Activated naive CD4-positive, alpha-beta T cell treated with anti-CD3 and anti-CD28 coated beads for 36 hours (primary cell): ENCODE measurements at regions of chr2 and their contacts with region 1.

Region 1: GRCh38 chr2:170928824-170929685 is at the start of gene GORASP2:
- DNase-seq: peak; percentile 99
- H3K4me3 Mint-ChIP-seq: peak within 1 kb of the TSS; percentile 98
- H3K27ac Mint-ChIP-seq: peak within 1 kb of the TSS; percentile 96
- H3K4me1 Mint-ChIP-seq: peaks cover 39% of the 10 kb centered on the region
- H3K27me3 Mint-ChIP-seq: no peaks in the 10 kb centered on the region
- total RNA-seq, gene GORASP2: 57.1 to 60.2 TPM

Region 2: DNA sequence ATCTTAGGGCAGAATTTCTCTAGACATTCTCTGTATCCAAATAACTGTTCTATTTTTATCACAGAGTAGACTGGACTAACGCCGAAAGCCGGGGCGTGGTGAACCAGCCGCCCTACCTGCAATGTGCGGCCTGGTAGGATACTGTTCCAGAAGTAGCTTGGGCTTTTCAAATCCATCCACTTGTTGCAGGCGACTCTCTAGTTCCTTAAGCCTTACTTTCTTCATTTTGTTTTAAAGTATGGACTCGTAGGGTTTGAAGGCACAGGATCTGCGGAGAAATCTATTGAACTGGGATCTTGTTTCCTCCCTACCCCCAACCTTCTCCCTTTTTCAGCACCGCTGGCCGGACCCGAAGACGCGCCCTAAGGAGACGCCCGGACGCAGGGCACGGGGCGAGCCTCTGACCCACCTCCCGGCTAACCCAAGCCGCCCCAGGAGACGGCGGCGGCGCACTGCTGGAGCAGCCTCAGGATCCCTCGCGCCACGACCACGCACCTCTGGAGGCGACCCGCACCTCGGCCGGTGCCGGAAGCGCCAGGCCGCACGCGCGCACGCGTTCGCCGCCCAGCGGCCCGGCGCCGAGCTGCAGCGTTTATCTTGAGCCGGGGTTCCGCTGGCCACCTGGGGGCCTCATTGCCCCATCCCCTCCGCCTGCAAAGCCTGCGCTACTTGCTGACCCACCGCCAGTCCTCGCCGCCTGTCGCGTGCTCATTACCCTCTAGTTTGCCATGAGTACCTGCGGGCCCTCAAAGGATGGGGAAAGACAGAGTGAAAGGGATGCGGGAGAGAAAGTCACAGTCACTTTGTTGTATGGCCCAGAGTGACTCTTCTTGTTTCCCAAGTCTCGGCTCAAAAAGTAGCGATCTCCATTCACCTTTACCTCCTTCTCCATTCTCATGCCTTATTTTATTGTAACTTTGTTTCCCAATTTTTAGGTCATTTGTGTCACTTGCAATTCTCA is 1104.4 kb before region 1 on chr2 and contains the start of gene METTL5:
- CTCF ChIA-PET with region 1: no interaction called
- intact Hi-C with region 1: loop called (anchors 10 kb)
- DNase-seq: peak; percentile 83
- H3K4me3 Mint-ChIP-seq: peak within 1 kb of the TSS; percentile 84
- H3K27ac Mint-ChIP-seq: peak within 1 kb of the TSS; percentile 71
- H3K4me1 Mint-ChIP-seq: peaks cover 56% of the 10 kb centered on the region
- H3K27me3 Mint-ChIP-seq: no peaks in the 10 kb centered on the region
- total RNA-seq, gene METTL5: 111 to 116 TPM

Region 3: DNA sequence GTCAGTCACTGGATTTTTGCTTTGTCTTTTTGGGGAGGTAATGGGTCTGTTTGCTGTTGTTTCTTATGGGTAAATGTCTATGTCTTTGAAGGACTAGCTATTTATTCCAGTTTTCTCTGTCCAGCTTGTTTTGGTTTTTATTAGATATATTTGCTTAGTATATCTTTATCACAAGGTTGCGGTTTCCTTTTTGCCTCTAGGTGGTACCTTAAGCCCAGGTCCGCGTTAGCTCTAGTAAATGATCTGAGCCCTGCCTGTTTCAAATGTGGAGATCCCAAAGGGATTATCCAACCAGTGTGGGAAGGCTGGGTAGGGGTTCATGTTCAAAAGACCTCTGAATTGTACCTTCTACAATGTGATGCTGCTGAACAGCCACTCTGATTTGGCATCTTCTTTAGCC is 636.6 kb before region 1 on chr2:
- CTCF ChIA-PET with region 1: no interaction called
- intact Hi-C with region 1: no loop called
- DNase-seq: no peak
- H3K4me3 Mint-ChIP-seq: no peak overlapping the region
- H3K27ac Mint-ChIP-seq: no peak overlapping the region
- H3K4me1 Mint-ChIP-seq: no peaks in the 10 kb centered on the region
- H3K27me3 Mint-ChIP-seq: peaks cover 28% of the 10 kb centered on the region

Region 4: GRCh38 chr2:170940066-170940465 is 11.0 kb after region 1 on chr2:
- CTCF ChIA-PET with region 1: interaction called, 9 read pairs
- intact Hi-C with region 1: loop called (anchors 1 kb)
- DNase-seq: no peak
- H3K4me3 Mint-ChIP-seq: no peak overlapping the region
- H3K27ac Mint-ChIP-seq: no peak overlapping the region
- H3K4me1 Mint-ChIP-seq: peaks cover 72% of the 10 kb centered on the region
- H3K27me3 Mint-ChIP-seq: no peaks in the 10 kb centered on the region

Region 5: DNA sequence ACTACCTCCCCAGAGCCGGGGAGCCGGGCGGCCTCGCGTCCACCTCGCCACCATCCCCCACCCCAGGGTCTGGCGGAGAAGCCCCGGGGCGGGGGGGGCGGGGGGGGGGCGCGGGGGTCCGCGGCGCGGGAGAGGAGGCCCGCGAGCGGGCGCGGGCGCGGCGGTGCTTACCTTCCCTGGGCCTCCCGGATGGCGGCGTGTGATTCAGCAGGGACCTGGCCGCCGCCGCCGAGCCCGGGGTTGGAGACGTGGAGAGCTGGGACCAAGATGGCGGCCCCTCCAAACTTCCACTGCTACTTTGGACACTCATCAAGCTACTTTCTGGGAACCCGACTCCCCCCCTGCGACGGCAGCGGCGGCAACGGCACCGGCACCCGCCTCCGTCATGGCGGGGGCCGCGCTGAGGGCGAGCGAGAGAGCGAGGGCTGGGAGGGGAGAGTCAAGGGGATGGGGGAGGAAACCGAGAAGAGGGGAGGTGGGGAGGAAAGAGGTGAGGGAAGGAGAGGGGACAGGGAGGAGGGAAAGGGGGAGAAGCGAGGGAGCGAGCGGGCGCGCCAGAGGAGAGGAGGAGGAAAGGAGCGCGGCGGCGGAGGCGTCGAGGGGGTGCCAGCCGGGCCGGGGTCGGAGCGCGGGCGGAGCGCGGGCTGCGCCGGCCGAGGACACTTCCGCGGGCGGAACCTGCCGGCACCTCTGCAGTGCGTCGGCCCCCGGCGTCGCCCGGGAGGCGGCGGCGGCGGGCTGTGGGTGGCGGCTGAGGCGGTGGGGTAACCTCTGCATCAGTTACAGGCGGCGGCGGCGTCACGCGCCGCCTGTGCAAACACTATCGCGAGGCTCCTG is 231.3 kb after region 1 on chr2 and contains the start of gene TLK1:
- CTCF ChIA-PET with region 1: interaction called, 6 read pairs
- intact Hi-C with region 1: loop called (anchors 1 kb)
- DNase-seq: peak; percentile 75
- H3K4me3 Mint-ChIP-seq: peak within 1 kb of the TSS; percentile 90
- H3K27ac Mint-ChIP-seq: peak within 1 kb of the TSS; percentile 93
- H3K4me1 Mint-ChIP-seq: peaks cover 57% of the 10 kb centered on the region
- H3K27me3 Mint-ChIP-seq: no peaks in the 10 kb centered on the region
- total RNA-seq, gene TLK1: 54.5 to 55.9 TPM

Region 6: GRCh38 chr2:171416009-171416926 is 487.2 kb after region 1 on chr2:
- CTCF ChIA-PET with region 1: interaction called, 4 read pairs
- intact Hi-C with region 1: loop called (anchors 1 kb)
- DNase-seq: peak; percentile 96
- H3K4me3 Mint-ChIP-seq: peak overlapping the region; percentile 32
- H3K27ac Mint-ChIP-seq: peak overlapping the region; percentile 92
- H3K4me1 Mint-ChIP-seq: peaks cover 38% of the 10 kb centered on the region
- H3K27me3 Mint-ChIP-seq: no peaks in the 10 kb centered on the region

Region 7: DNA sequence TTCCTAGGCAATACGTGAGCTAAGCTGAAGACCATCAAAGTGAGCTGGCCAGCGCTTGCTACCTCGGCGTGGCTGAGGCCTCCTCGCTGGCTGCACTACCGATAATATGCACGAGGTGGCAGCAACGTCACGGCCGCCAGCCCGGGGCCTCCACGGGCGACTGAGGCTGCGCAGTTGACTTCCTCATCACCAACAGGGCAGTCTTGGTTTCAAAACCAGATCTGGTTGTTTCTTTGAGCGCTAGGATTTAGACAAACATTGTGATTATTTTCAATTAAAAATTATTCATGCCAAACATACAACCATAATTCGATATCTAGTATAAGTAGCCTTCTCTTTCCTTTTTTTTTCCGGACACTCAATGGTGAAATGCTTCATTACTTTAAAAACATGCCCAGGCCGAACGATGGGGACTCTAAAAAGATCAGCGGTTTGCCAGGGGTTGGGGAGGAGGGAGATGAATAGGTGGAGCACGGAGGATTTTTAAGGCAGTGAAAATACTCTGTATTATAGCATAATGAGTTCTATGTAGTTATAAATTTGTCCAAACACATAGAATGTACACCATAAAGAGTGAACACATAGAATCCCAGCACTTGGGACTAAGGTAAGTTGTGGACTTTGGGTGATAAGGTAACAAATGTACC is 645.2 kb after region 1 on chr2:
- CTCF ChIA-PET with region 1: no interaction called
- intact Hi-C with region 1: loop called (anchors 1 kb)
- DNase-seq: peak; percentile 86
- H3K4me3 Mint-ChIP-seq: no peak overlapping the region
- H3K27ac Mint-ChIP-seq: peak overlapping the region; percentile 53
- H3K4me1 Mint-ChIP-seq: peaks cover 5% of the 10 kb centered on the region
- H3K27me3 Mint-ChIP-seq: no peaks in the 10 kb centered on the region

Region 8: GRCh38 chr2:171922230-171923022 is 993.4 kb after region 1 on chr2 and contains the start of gene HAT1:
- CTCF ChIA-PET with region 1: no interaction called
- intact Hi-C with region 1: loop called (anchors 1 kb)
- DNase-seq: peak; percentile 99
- H3K4me3 Mint-ChIP-seq: peak within 1 kb of the TSS; percentile 88
- H3K27ac Mint-ChIP-seq: peak within 1 kb of the TSS; percentile 97
- H3K4me1 Mint-ChIP-seq: peaks cover 34% of the 10 kb centered on the region
- H3K27me3 Mint-ChIP-seq: no peaks in the 10 kb centered on the region
- total RNA-seq, gene HAT1: 74.6 to 77.2 TPM